MCF 10A (cell line): ENCODE measurements at regions of chr2 and their contacts with region 1.

Region 1: GRCh38 chr2:120520929-120521912 is 175.3 kb downstream of the INHBB start:
- DNase-seq: peak; percentile 68
- H3K4me3 Mint-ChIP-seq: no peak overlapping the region
- H3K27ac Mint-ChIP-seq: no peak overlapping the region
- H3K4me1 Mint-ChIP-seq: peaks cover 8% of the 10 kb centered on the region
- H3K27me3 Mint-ChIP-seq: peaks cover 9% of the 10 kb centered on the region
- CTCF ChIP-seq: peak; percentile 93

Region 2: DNA sequence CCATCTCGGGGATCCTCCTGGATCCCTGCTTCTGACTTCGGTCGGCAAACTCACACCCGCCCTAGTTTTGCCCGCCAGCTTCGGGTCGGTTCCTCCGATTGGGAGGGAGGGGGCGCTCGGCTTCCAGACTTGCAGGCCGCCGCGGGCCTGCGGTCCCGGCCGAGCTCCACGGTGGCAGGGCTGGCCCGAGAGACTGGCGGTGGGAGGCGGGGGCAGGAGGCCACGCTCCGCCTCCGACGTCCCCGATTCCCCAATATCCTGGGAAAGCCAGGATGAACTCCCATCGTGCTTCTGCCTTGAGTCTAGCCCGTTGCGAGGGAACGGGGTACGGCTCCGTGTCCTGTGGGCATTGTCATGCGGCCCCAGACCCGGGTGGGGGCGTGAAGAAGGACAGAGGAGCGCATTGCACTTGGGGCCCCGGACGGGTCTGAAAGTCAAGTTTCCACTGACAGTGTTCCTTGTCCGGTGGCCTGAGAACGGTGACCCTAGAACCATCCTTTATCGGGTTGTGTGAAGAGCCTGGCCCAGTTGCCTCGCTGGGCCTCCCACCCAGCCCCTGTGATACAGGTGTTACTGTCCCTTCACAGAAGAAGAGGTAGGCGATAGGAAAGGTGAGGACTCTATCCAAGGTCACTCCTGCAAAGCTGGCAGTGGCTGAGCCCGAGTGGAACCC is 177.7 kb before region 1 on chr2:
- CTCF ChIA-PET with region 1: no interaction called
- POLR2A ChIA-PET with region 1: no interaction called
- intact Hi-C with region 1: loop called (anchors 1 kb)
- DNase-seq: peak; percentile 70
- H3K4me3 Mint-ChIP-seq: peak overlapping the region; percentile 4
- H3K27ac Mint-ChIP-seq: no peak overlapping the region
- H3K4me1 Mint-ChIP-seq: peaks cover 6% of the 10 kb centered on the region
- H3K27me3 Mint-ChIP-seq: peaks cover 12% of the 10 kb centered on the region
- CTCF ChIP-seq: peak; percentile 84

Region 3: DNA sequence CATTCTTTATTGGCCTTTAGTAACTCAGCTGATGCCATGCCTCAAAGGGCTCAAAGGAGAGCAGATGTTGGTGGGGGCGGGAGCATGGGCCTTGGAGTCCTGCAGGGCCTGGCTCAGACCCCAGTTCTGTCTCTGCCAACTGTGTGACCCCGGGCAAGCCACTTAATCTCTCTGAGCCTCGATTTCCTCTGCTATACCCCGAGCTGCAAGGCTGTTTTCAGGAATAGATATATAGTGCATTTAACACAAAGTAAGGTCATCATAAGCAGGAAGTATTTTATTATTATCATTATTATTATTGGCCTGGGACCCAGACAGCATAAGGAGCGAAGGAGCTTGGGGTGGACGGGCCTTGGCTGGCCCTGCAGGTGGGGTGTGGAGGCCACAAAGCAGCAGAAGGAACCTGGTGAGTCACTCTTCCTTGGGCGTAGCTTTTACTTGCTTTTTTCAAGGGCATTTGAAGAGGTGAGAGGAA is 12.6 kb before region 1 on chr2:
- CTCF ChIA-PET with region 1: interaction called, 14 read pairs
- POLR2A ChIA-PET with region 1: no interaction called
- intact Hi-C with region 1: no loop called
- DNase-seq: peak; percentile 86
- H3K4me3 Mint-ChIP-seq: no peak overlapping the region
- H3K27ac Mint-ChIP-seq: no peak overlapping the region
- H3K4me1 Mint-ChIP-seq: peaks cover 13% of the 10 kb centered on the region
- H3K27me3 Mint-ChIP-seq: no peaks in the 10 kb centered on the region
- CTCF ChIP-seq: no peak

Region 4: GRCh38 chr2:120613742-120614571 is 92.7 kb after region 1 on chr2:
- CTCF ChIA-PET with region 1: no interaction called
- POLR2A ChIA-PET with region 1: no interaction called
- intact Hi-C with region 1: no loop called
- DNase-seq: no peak
- H3K4me3 Mint-ChIP-seq: no peak overlapping the region
- H3K27ac Mint-ChIP-seq: peak overlapping the region; percentile 54
- H3K4me1 Mint-ChIP-seq: peaks cover 6% of the 10 kb centered on the region
- H3K27me3 Mint-ChIP-seq: no peaks in the 10 kb centered on the region
- CTCF ChIP-seq: no peak

Region 5: GRCh38 chr2:120641366-120641771 is 120.1 kb after region 1 on chr2:
- CTCF ChIA-PET with region 1: no interaction called
- POLR2A ChIA-PET with region 1: no interaction called
- intact Hi-C with region 1: no loop called
- DNase-seq: no peak
- H3K4me3 Mint-ChIP-seq: no peak overlapping the region
- H3K27ac Mint-ChIP-seq: no peak overlapping the region
- H3K4me1 Mint-ChIP-seq: no peaks in the 10 kb centered on the region
- H3K27me3 Mint-ChIP-seq: no peaks in the 10 kb centered on the region
- CTCF ChIP-seq: no peak